Prostate gland (tissue), 2 donors: ENCODE measurements at regions of chrX and their contacts with region 1.

Region 1: DNA sequence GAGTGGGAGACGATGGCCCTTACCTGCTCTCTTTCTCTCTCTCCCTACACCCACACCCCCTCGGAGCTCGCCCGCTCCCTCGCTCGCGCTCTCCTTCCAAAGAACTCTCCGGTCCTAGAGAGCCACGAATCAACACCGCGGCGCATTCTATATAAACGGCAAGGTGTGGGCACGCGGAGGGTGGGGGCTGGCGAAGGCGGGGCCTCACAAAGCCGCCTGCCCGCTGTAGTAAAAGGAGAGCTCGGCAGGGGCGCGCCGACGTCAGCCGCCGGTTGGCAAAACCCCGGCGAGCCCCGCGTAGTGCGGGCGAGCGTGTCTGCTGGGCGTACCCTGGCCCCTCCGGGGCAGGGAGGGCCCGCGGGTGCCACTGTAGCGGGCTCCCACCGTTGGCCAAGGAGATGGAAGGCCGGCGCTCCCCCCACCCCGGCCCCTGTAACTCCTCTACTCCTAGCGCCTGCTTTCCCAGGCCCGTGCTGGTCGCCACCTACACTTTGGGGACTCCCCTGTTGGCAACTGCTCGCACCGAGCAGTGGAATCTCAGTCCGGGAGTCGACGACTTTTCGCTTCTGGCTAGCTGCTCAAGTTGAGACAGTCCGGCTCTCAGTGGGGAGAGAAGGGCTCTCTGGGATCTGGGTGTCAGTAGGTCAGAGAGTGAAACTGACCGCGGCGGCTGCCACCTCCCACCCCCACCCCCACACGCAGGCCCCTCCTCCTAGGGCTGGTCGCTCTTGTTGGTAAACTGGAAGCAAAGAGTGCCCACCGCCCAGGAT is 325.5 kb upstream of the F9 start:
- DNase-seq: peak; percentile 68
- H3K4me3 ChIP-seq: peak overlapping the region; percentile 45 to 46
- H3K27ac ChIP-seq: peak overlapping the region; percentile 88
- H3K4me1 ChIP-seq: no peaks in the 10 kb centered on the region
- H3K27me3 ChIP-seq: no peaks in the 10 kb centered on the region
- CTCF ChIP-seq: peak in 2 of 4 experiments; percentile 16 to 27
- POLR2A ChIP-seq: peak; percentile 27

Region 2: GRCh38 chrX:138858438-138858837 is 346.6 kb before region 1 on chrX:
- intact Hi-C with region 1: loop called (anchors 10 kb)
- DNase-seq: no peak
- H3K4me3 ChIP-seq: no peak overlapping the region
- H3K27ac ChIP-seq: no peak overlapping the region
- H3K4me1 ChIP-seq: no peaks in the 10 kb centered on the region
- H3K27me3 ChIP-seq: no peaks in the 10 kb centered on the region
- CTCF ChIP-seq: no peak
- POLR2A ChIP-seq: no peak